Activated B cell treated with CpG ODN at 0.5 μM for 24 hours (primary cell): ENCODE measurements at regions of chr10 and their contacts with region 1.

Region 1: DNA sequence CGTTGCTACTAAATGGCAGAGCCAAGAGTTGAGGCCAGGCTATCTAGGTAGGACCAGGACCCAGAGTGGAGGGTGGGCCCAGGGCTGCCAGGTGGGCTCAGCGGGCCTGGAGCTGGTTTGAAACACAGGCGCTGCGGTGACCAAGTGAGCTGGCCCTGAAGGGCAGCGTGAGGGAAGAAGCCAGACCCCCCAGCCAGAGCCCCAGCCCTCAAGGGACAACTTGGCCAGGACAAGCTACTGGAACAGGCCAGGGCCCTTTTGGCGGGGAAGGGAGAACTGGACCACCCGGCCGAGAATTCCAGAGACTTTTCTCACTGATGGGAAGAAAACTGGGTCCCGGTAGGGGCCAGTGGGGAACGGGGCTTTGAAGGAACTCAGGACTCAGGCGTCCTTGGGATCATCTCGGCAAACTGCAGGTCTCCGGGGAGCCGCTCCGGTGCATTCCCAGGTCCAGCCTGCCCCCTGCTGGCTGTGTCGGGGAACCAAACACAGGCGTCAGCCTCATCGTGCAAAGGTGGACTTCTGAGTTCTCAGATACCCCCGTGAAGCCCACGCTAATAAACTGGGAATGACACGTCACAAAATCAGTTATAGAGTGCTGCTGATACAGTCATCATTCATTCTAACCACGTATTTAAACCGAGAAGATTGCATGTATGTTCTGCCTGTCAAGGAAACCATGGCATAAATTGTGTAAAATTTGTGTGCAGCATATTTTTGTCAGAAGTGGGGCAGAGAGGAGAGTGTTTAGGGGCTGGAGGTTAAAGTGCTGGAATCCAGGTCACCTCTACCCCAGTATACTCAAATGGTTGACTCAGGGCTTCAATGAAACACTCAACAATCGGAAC is 76.0 kb upstream of the CPXM2 start:
- DNase-seq: no peak
- ATAC-seq: no peak
- H3K4me3 Mint-ChIP-seq: no peak overlapping the region
- H3K27ac Mint-ChIP-seq: no peak overlapping the region
- H3K4me1 Mint-ChIP-seq: peaks cover 4% of the 10 kb centered on the region
- H3K27me3 Mint-ChIP-seq: peaks cover 60% of the 10 kb centered on the region
- CTCF ChIP-seq: no peak

Region 2: DNA sequence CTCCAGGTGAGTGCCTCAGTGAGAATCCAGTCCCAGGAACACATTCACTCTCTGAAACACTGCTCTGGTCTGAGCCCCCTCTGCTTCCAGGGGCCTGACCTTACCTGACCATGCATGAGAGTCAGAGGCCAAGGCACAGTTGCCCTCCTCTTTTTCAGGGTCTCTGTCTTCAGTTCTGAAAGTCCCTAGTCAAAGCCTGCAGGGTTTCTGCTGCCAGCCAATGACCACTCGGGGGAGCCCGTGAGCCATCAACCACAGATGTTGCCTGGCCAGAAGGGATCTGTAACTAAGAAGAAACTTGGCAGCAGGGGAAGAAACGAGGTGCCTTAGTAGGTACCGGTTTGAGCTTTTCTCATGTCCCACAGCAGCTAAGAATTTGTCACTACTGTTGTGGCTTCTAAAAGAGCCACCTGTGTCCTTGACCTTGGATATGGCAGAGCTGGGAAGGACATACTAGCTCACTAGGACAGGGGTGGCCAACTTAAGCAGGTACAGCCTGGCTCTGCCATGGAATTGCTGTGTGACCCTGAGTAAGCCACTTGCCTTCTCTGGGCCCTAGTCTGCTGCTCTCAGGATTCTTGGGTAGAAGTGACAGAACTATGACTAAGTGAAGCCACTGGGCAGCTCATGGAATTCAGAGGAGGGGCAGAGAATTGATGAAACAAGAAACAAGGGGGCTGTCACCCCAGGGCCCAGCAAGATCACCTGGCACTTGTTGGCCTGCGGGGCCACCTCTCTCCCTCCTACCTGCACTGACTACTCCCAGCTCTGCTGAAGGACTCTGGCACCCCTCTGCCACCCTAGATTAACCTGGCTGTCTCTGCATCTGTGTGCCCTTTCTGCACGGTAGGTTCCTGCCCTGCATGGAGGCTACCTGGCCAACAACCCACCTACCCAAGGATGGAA is 385.3 kb before region 1 on chr10:
- CTCF ChIA-PET with region 1: interaction called, 12 read pairs
- POLR2A ChIA-PET with region 1: no interaction called
- intact Hi-C with region 1: no loop called
- DNase-seq: peak; percentile 55
- ATAC-seq: peak; percentile 72
- H3K4me3 Mint-ChIP-seq: no peak overlapping the region
- H3K27ac Mint-ChIP-seq: no peak overlapping the region
- H3K4me1 Mint-ChIP-seq: no peaks in the 10 kb centered on the region
- H3K27me3 Mint-ChIP-seq: peaks cover 43% of the 10 kb centered on the region
- CTCF ChIP-seq: peak; percentile 31

Region 3: DNA sequence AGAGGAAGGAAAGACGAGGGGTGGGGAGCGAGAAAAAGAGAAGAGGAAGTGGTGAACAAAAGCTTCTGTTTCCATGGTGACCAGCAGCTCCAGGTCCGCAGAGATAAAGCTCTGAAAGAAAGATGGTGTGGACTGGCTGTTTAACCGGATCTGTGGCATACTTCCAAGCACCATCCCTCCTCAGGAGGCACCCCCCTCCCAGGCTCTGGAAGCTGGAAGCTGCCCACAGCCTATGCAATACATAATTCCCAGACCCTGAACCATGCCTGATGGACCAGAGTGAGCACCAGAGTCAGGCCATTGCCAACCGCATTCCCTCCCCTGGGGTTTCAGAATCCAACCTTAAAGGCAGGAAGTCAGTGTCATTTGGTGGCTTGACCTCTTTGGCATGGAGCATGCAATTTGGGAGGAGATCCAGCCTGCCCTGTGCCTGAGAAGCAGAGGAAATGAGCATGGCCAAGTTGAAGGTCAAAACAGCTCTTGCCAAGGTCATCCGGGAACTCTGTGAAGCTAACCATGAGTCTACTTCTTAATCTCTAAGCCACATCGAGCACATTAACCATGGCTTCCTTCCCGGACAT is 53.8 kb before region 1 on chr10:
- CTCF ChIA-PET with region 1: no interaction called
- POLR2A ChIA-PET with region 1: no interaction called
- intact Hi-C with region 1: no loop called
- DNase-seq: no peak
- ATAC-seq: no peak
- H3K4me3 Mint-ChIP-seq: no peak overlapping the region
- H3K27ac Mint-ChIP-seq: no peak overlapping the region
- H3K4me1 Mint-ChIP-seq: peaks cover 6% of the 10 kb centered on the region
- H3K27me3 Mint-ChIP-seq: peaks cover 52% of the 10 kb centered on the region
- CTCF ChIP-seq: no peak